ENCODE measurements at regions of chr9 and their contacts with region 1.

Region 1: GRCh38 chr9:131799177-131799823 is 59.4 kb upstream of the RAPGEF1 start:
- DNase-seq: peak; percentile 46
- H3K4me3 ChIP-seq: no peak overlapping the region
- H3K27ac ChIP-seq: no peak overlapping the region
- H3K4me1 ChIP-seq: no peaks in the 10 kb centered on the region
- H3K27me3 ChIP-seq: peaks cover 12% of the 10 kb centered on the region
- CTCF ChIP-seq: no peak
- EP300 ChIP-seq: no peak
- POLR2A ChIP-seq: no peak

Region 2: GRCh38 chr9:131334629-131335367 is 464.5 kb before region 1 on chr9:
- in situ Hi-C with region 1: no loop called
- intact Hi-C with region 1: no loop called
- DNase-seq: no peak
- H3K4me3 ChIP-seq: no peak overlapping the region
- H3K27ac ChIP-seq: no peak overlapping the region
- H3K4me1 ChIP-seq: peaks cover 0 to 6% (median 0%) of the 10 kb centered on the region in 4 donors
- H3K27me3 ChIP-seq: no peaks in the 10 kb centered on the region
- CTCF ChIP-seq: no peak
- EP300 ChIP-seq: no peak
- POLR2A ChIP-seq: no peak

Region 3: GRCh38 chr9:131464354-131465000 is 334.8 kb before region 1 on chr9:
- in situ Hi-C with region 1: no loop called
- intact Hi-C with region 1: no loop called
- DNase-seq: no peak
- H3K4me3 ChIP-seq: no peak overlapping the region
- H3K27ac ChIP-seq: no peak overlapping the region
- H3K4me1 ChIP-seq: no peaks in the 10 kb centered on the region
- H3K27me3 ChIP-seq: no peaks in the 10 kb centered on the region
- CTCF ChIP-seq: no peak
- EP300 ChIP-seq: no peak
- POLR2A ChIP-seq: no peak

Region 4: DNA sequence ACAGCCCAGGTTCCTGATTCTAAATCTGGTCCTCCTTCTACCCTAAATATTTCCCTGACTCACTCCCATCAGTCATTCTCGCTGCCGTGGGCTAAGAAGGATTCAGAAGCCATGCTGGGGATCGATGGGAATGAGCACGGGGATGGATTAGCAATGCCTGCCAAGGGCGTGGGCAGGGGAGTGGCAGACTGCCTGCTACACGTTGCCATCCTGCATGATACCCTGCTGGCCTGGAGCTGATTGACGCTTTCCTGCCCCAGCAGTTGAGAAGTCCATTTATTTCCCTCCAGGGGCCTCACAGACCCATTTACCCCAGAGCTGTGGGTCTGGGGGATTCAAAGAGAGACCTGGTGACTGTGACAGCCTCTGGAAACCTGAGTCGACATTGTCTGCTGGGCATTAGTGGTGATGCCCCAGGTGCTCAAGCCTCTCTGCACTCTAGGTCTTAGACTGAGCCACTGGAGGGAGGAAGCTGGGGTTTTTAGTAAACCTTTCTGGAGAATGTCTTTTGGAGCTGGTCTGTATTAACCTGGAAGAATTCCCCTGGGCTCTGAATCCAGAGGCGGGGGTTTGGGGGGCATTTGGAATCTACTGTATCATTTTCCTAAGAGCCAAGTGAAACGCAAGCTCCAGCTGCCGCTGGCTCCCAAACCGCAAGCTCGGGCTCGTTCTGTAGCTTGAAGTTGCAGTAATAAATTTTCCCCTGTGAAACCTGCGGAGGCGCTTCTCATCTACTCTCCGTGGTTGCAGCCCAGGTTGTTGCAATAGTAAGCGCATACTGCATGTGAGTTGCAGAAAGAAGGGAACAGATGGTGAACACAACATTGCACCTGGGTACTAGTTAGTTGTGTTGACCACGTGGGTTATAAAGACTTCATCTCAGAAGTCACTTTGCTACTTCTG is 16.9 kb after region 1 on chr9:
- in situ Hi-C with region 1: no loop called
- intact Hi-C with region 1: no loop called
- DNase-seq: no peak
- H3K4me3 ChIP-seq: no peak overlapping the region
- H3K27ac ChIP-seq: no peak overlapping the region
- H3K4me1 ChIP-seq: no peaks in the 10 kb centered on the region
- H3K27me3 ChIP-seq: peaks cover 63% of the 10 kb centered on the region
- CTCF ChIP-seq: no peak
- EP300 ChIP-seq: no peak
- POLR2A ChIP-seq: no peak

Region 5: DNA sequence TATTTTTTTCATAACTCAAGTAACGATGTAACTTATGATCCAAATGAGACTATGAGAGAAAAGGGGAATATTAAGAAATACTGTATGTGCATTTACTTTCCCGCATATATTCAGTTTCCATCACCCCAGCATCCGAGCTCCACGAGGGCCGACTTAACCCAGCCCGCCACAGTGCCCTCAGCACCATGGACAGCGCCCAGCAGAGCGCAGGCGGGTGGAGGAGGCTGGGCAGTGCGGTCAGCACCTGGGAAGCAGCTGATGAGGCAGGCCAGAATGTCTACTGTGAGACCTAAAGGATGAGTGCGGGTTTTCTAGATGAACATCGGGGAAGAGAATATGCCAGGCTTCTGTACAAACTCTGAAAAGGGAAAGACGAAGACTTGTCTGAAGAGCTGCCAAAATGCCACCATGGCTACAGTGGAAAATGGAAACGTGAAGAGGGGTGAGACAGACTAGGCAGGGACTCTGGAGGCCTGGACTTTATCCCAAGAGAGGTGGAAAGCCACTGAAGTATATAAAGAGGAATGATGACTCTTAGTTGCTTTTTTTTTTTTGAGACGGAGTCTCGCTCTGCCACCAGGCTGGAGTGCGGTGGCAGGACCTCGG is 314.9 kb after region 1 on chr9:
- in situ Hi-C with region 1: loop called in 1 of 4 experiments (anchors 25 kb)
- intact Hi-C with region 1: no loop called
- DNase-seq: peak; percentile 41
- H3K4me3 ChIP-seq: no peak overlapping the region
- H3K27ac ChIP-seq: no peak overlapping the region
- H3K4me1 ChIP-seq: no peaks in the 10 kb centered on the region
- H3K27me3 ChIP-seq: peaks cover 24% of the 10 kb centered on the region
- CTCF ChIP-seq: no peak
- EP300 ChIP-seq: no peak
- POLR2A ChIP-seq: no peak

Measured in transverse colon (tissue), 4 donors.